Activated CD4-positive, alpha-beta T cell treated with anti-CD3 and anti-CD28 coated beads for 36 hours (primary cell): ENCODE measurements at regions of chr1 and their contacts with region 1.

Region 1: DNA sequence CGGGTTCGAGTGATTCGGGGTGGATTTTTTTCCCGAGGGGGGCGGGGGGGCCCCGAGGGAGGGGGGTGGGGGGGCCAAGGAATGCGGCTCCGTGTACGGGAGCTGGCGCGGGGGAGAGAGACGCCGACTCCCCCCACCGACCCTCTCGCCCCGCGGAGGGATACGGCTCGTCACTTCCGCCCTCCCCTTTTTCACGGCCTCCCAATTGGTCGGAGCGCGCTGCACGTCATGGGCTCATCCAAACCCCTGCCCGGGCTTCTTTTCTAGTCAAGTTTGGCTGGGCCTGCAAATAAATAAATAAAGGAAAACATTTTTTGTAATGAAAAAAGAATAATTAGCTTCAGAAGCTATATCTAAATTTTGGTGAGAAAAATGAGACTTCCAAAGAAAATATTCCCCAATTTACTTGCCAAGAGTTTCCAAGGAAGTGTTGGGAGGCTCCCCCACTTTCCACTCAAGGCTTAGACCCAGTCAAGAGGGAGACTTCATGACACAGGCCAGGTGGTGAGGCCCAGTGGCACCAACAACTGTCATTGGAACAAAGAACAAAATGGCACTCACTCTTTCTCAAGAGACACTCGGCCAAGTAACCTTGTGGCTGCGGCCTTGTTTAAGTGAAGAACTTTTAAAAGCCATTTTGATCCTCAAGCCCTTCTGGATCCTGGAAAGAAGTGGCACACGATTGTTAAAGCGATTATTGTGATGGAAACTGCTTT is at the start of gene POGZ:
- DNase-seq: peak; percentile 97
- ATAC-seq: peak; percentile 80
- H3K4me3 Mint-ChIP-seq: peak within 1 kb of the TSS; percentile 83
- H3K27ac Mint-ChIP-seq: peak within 1 kb of the TSS; percentile 94
- H3K4me1 Mint-ChIP-seq: peaks cover 24% of the 10 kb centered on the region
- H3K27me3 Mint-ChIP-seq: peaks cover 19% of the 10 kb centered on the region
- total RNA-seq, gene POGZ: 81.3 to 104 TPM

Region 2: GRCh38 chr1:151346769-151347522 is 112.5 kb before region 1 on chr1 and contains the start of gene RFX5:
- CTCF ChIA-PET with region 1: no interaction called
- POLR2A ChIA-PET with region 1: no interaction called
- intact Hi-C with region 1: loop called in 1 of 2 experiments (anchors 1 kb)
- DNase-seq: peak; percentile 96
- ATAC-seq: peak; percentile 98
- H3K4me3 Mint-ChIP-seq: peak within 1 kb of the TSS; percentile 96
- H3K27ac Mint-ChIP-seq: peak within 1 kb of the TSS; percentile 94
- H3K4me1 Mint-ChIP-seq: peaks cover 31% of the 10 kb centered on the region
- H3K27me3 Mint-ChIP-seq: no peaks in the 10 kb centered on the region
- total RNA-seq, gene RFX5: 47.6 to 50.4 TPM

Region 3: GRCh38 chr1:151443846-151444782 is 15.4 kb before region 1 on chr1:
- CTCF ChIA-PET with region 1: interaction called, 7 read pairs
- POLR2A ChIA-PET with region 1: interaction called, 6 read pairs
- intact Hi-C with region 1: loop called (anchors 1 to 2 kb)
- DNase-seq: peak; percentile 80
- ATAC-seq: peak; percentile 96
- H3K4me3 Mint-ChIP-seq: no peak overlapping the region
- H3K27ac Mint-ChIP-seq: peak overlapping the region; percentile 42
- H3K4me1 Mint-ChIP-seq: peaks cover 59% of the 10 kb centered on the region
- H3K27me3 Mint-ChIP-seq: no peaks in the 10 kb centered on the region

Region 4: DNA sequence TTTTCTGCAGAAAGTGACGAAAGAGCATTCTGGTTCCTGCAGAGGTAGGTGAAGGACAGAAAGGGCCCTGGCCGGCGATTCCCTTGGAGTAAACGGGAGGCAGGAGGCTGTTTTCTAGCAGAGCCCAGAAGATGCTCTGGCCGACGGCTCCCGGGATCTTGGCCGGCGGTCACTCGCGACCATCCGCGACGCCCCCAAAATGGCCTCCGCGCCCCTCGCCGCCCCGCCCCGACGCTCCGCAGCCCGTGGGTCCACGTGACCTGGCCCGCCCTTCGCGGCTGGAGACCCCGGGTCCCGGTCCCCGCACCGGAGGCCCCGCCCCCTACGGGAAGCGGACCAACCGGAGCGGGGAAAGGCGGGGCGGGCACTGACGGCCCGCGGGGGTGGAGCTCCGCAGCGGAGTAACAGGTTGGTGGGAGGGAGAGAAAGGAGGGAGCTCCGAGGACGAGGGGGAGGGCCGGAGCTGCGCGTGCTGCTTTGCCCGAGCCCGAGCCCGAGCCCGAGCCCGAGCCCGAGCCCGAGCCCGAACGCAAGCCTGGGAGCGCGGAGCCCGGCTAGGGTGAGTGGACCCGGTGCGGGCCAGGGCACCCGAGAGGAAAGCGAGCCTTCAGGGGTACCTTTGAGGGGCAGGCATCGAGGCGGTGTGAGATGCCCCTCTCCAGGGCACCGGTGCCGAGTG is 51.6 kb after region 1 on chr1 and contains the start of gene CGN:
- CTCF ChIA-PET with region 1: no interaction called
- POLR2A ChIA-PET with region 1: no interaction called
- intact Hi-C with region 1: loop called in 1 of 2 experiments (anchors 1 kb)
- DNase-seq: peak; percentile 91
- ATAC-seq: peak; percentile 98
- H3K4me3 Mint-ChIP-seq: peak within 1 kb of the TSS; percentile 80
- H3K27ac Mint-ChIP-seq: peak within 1 kb of the TSS; percentile 47
- H3K4me1 Mint-ChIP-seq: peaks cover 23% of the 10 kb centered on the region
- H3K27me3 Mint-ChIP-seq: no peaks in the 10 kb centered on the region
- total RNA-seq, gene CGN: 0.67 to 1.4 TPM

Region 5: GRCh38 chr1:151611832-151612500 is 152.5 kb after region 1 on chr1 and contains the start of gene SNX27:
- CTCF ChIA-PET with region 1: no interaction called
- POLR2A ChIA-PET with region 1: no interaction called
- intact Hi-C with region 1: loop called in 1 of 2 experiments (anchors 2 kb)
- DNase-seq: peak; percentile 95
- ATAC-seq: peak; percentile 93
- H3K4me3 Mint-ChIP-seq: peak within 1 kb of the TSS; percentile 99
- H3K27ac Mint-ChIP-seq: peak within 1 kb of the TSS; percentile 95
- H3K4me1 Mint-ChIP-seq: peaks cover 46% of the 10 kb centered on the region
- H3K27me3 Mint-ChIP-seq: peaks cover 6% of the 10 kb centered on the region
- total RNA-seq, gene SNX27: 28.5 to 29.1 TPM